Activated CD4-positive, alpha-beta memory T cell treated with anti-CD3 and anti-CD28 coated beads, Interleukin-2, amount 10 ng/mL, durations not matched to agents 7 days and 5 days (primary cell): ENCODE measurements at regions of chr6 and their contacts with region 1.

Region 1: GRCh38 chr6:149028767-149029405 is 282.1 kb downstream of the UST start:
- DNase-seq: peak; percentile 71
- H3K4me3 Mint-ChIP-seq: no peak overlapping the region
- H3K27ac Mint-ChIP-seq: peak overlapping the region; percentile 71
- H3K4me1 Mint-ChIP-seq: peaks cover 53% of the 10 kb centered on the region
- H3K27me3 Mint-ChIP-seq: no peaks in the 10 kb centered on the region

Region 2: GRCh38 chr6:149012040-149012545 is 16.8 kb before region 1 on chr6:
- CTCF ChIA-PET with region 1: no interaction called
- POLR2A ChIA-PET with region 1: no interaction called
- DNase-seq: no peak
- H3K4me3 Mint-ChIP-seq: no peak overlapping the region
- H3K27ac Mint-ChIP-seq: no peak overlapping the region
- H3K4me1 Mint-ChIP-seq: no peaks in the 10 kb centered on the region
- H3K27me3 Mint-ChIP-seq: no peaks in the 10 kb centered on the region

Region 3: GRCh38 chr6:149060300-149060997 is 31.6 kb after region 1 on chr6:
- CTCF ChIA-PET with region 1: interaction called, 12 read pairs
- POLR2A ChIA-PET with region 1: interaction called, 53 read pairs
- DNase-seq: peak; percentile 78
- H3K4me3 Mint-ChIP-seq: peak overlapping the region; percentile 63
- H3K27ac Mint-ChIP-seq: peak overlapping the region; percentile 89
- H3K4me1 Mint-ChIP-seq: peaks cover 66% of the 10 kb centered on the region
- H3K27me3 Mint-ChIP-seq: no peaks in the 10 kb centered on the region

Region 4: DNA sequence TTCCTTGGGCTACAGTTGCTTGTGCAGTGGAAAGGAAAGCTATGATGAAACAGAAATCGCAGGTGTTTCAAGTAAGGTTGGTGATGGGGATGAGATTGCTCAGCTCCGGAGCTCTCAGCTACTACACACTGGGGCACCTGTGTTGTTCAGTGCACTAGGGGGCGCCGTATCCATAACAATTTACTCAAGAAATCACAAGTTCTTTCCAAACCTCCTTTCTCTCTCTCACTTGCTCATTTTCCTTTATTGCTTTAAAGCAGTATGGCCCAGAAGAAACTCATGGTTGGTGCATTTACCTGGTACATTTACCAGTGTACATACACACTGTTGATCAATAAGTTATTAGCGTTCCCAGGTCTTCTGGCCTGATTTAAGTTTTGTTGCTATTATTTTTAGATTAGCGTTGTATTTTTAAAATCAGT is 53.4 kb after region 1 on chr6:
- CTCF ChIA-PET with region 1: interaction called, 70 read pairs
- POLR2A ChIA-PET with region 1: interaction called, 86 read pairs
- DNase-seq: peak; percentile 91
- H3K4me3 Mint-ChIP-seq: peak overlapping the region; percentile 50
- H3K27ac Mint-ChIP-seq: peak overlapping the region; percentile 96
- H3K4me1 Mint-ChIP-seq: peaks cover 87% of the 10 kb centered on the region
- H3K27me3 Mint-ChIP-seq: no peaks in the 10 kb centered on the region

Region 5: DNA sequence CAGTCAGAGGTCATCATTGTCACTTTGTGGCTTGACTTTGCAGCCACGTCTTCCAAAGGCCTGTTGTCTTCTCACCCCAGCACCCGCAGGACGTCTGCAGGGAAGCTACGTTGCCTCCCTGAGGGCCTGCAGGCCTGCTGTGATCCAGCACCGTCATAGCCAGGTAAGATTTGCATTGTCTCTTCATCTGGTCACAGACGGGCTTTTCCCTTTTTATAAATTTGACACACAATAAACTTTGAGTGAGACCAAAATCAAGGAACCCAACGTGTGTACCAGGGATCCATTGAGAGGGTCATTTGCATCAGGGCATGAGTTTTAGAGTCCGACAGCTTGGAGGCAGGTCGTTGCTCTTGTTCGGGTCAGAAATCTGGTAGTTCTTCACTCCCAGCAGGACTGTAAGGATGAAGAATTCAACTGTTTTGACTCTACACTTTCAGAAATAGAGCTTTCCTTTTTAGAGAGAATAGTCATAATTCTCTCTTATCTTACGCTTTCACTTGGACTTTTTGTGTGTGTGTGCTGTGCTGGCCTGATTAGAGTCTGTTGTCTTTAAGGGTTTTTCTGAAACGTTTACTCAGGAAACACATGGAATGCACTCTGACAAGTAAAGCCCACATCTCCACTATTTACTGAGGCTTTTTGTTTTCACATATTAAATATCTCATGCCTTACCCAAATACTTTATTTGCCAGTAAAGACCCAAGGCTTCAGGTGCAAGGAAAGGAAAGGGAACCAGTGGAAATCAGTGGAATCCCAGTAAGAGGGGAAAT is 111.4 kb after region 1 on chr6:
- CTCF ChIA-PET with region 1: no interaction called
- POLR2A ChIA-PET with region 1: interaction called, 33 read pairs
- DNase-seq: peak; percentile 88
- H3K4me3 Mint-ChIP-seq: peak overlapping the region; percentile 77
- H3K27ac Mint-ChIP-seq: peak overlapping the region; percentile 96
- H3K4me1 Mint-ChIP-seq: peaks cover 63% of the 10 kb centered on the region
- H3K27me3 Mint-ChIP-seq: no peaks in the 10 kb centered on the region

Region 6: DNA sequence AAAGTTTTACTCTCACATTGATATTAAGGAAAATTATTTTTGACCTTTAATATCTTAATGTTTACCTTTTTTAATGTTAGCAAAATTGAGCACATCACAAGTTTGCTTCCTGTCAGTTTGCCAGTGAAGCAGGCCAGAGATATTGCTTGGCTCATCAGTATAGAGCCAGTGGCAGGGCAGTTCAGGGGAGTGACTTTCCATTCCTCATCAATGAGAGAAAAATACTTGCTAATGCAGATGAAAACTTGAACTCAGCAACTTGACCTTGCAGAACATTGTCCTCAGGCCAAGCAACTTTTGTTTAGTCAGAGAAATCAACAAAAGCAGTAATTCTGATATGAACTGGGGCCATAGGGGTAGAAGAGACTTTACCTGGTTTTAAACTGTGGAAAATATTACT is 295.5 kb after region 1 on chr6:
- CTCF ChIA-PET with region 1: interaction called, 5 read pairs
- POLR2A ChIA-PET with region 1: interaction called, 131 read pairs
- DNase-seq: peak; percentile 38
- H3K4me3 Mint-ChIP-seq: peak overlapping the region; percentile 53
- H3K27ac Mint-ChIP-seq: peak overlapping the region; percentile 64
- H3K4me1 Mint-ChIP-seq: peaks cover 76% of the 10 kb centered on the region
- H3K27me3 Mint-ChIP-seq: no peaks in the 10 kb centered on the region

Region 7: GRCh38 chr6:149513915-149514314 is 485.0 kb after region 1 on chr6:
- CTCF ChIA-PET with region 1: interaction called, 36 read pairs
- POLR2A ChIA-PET with region 1: interaction called, 14 read pairs
- DNase-seq: no peak
- H3K4me3 Mint-ChIP-seq: no peak overlapping the region
- H3K27ac Mint-ChIP-seq: no peak overlapping the region
- H3K4me1 Mint-ChIP-seq: peaks cover 41% of the 10 kb centered on the region
- H3K27me3 Mint-ChIP-seq: no peaks in the 10 kb centered on the region